HCT116 (cell line): ENCODE measurements at regions of chr7 and their contacts with region 1.

Region 1: DNA sequence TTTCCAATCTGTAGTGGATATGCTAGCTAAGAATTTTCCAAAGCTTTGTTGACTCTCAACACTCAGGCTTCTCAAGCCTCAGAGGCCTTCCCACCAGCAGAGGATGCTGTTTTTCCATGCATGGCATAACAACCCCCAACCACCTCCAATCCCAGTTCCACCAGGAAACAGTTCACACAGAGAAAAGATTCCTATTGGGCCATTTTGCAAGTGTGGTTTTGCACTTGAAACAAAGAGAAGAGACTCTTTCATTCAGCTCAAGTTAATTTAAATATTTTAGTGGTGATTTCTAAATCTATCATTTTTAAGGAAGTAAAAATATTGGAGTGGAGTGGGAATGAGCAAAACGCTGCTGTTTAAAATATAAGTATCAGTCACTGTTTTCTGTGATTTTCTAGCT is 105.6 kb upstream of the COL1A2 start:
- DNase-seq: peak; percentile 81
- ATAC-seq: peak; percentile 100
- H3K4me3 ChIP-seq: no peak overlapping the region
- H3K27ac ChIP-seq: no peak overlapping the region
- H3K4me1 ChIP-seq: no peaks in the 10 kb centered on the region
- H3K27me3 ChIP-seq: no peaks in the 10 kb centered on the region
- CTCF ChIP-seq: peak; percentile 92 to 98 (median 98)
- POLR2A ChIP-seq: no peak
- RAD21 ChIP-seq: peak; percentile 99

Region 2: GRCh38 chr7:94301024-94301586 is 12.0 kb after region 1 on chr7:
- CTCF ChIA-PET with region 1: interaction called, 15 read pairs
- POLR2A ChIA-PET with region 1: interaction called, 4 read pairs
- RAD21 ChIA-PET with region 1: interaction called in 1 of 2 experiments, 3 read pairs
- intact Hi-C with region 1: no loop called
- DNase-seq: peak; percentile 79
- ATAC-seq: peak; percentile 97
- H3K4me3 ChIP-seq: peak overlapping the region; percentile 13 to 24; a peak in 3 of 4 replicates
- H3K27ac ChIP-seq: peak overlapping the region; percentile 55
- H3K4me1 ChIP-seq: peaks cover 30 to 46% of the 10 kb centered on the region in 2 experiments
- H3K27me3 ChIP-seq: no peaks in the 10 kb centered on the region
- CTCF ChIP-seq: no peak
- POLR2A ChIP-seq: no peak
- RAD21 ChIP-seq: 0 out of 2 replicates have a peak, but pooled peaks have one; percentile 3

Region 3: GRCh38 chr7:94355454-94355853 is 66.4 kb after region 1 on chr7:
- CTCF ChIA-PET with region 1: no interaction called
- POLR2A ChIA-PET with region 1: no interaction called
- RAD21 ChIA-PET with region 1: no interaction called
- intact Hi-C with region 1: no loop called
- DNase-seq: no peak
- ATAC-seq: no peak
- H3K4me3 ChIP-seq: no peak overlapping the region
- H3K27ac ChIP-seq: no peak overlapping the region
- H3K4me1 ChIP-seq: no peaks in the 10 kb centered on the region
- H3K27me3 ChIP-seq: no peaks in the 10 kb centered on the region
- CTCF ChIP-seq: no peak
- POLR2A ChIP-seq: no peak
- RAD21 ChIP-seq: no peak

Region 4: DNA sequence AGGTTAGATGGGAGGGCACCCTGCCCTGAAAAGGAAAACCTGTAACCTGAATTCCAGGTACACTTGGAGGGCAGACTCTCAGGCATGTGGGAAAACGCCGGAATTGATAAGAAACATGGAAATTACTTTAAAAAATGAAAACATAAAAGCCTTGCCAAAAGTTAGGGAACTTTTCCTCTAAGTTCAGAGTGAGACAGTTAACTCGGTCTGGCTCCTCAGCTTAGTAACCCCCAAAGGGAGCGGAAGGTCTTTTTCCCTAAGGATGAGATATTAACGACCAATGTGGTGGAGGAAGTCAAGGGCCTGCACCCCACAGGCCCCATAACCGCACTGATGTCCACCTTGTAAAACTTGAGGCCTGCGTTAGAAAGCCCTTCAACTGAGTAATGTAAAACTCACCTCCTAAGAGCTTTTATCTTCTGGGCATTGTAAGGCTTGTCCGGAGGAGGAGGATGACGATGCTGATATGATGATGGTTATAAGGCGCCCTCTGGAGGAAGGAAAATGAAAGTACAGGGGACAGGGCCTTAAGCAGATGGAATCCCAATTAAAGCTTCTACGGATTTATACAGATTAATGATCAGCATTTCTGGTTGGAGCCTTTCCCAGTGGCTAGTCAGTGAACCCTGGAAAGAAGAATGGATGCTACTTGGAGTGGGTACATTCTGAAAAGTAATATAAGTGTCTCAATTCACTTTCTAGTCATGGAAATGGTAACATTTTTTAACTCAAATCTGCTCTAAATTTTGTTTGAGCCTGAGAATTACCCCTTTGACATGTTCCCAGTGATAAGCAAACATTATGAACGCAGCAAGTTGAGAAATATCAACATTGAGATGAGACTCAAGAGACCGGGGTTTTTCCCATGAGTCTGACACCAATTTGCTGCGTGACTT is 106.3 kb after region 1 on chr7:
- CTCF ChIA-PET with region 1: interaction called, 89 read pairs
- POLR2A ChIA-PET with region 1: interaction called, 5 read pairs
- RAD21 ChIA-PET with region 1: interaction called, 14 to 23 read pairs
- intact Hi-C with region 1: loop called (anchors 1 kb)
- DNase-seq: peak; percentile 59
- ATAC-seq: peak; percentile 96
- H3K4me3 ChIP-seq: no peak overlapping the region
- H3K27ac ChIP-seq: no peak overlapping the region
- H3K4me1 ChIP-seq: no peaks in the 10 kb centered on the region
- H3K27me3 ChIP-seq: no peaks in the 10 kb centered on the region
- CTCF ChIP-seq: peak; percentile 64 to 81 (median 78)
- POLR2A ChIP-seq: no peak
- RAD21 ChIP-seq: peak; percentile 87

Region 5: GRCh38 chr7:94436018-94436604 is 147.0 kb after region 1 on chr7:
- CTCF ChIA-PET with region 1: interaction called, 41 read pairs
- POLR2A ChIA-PET with region 1: no interaction called
- RAD21 ChIA-PET with region 1: interaction called in 1 of 2 experiments, 3 read pairs
- intact Hi-C with region 1: loop called (anchors 1 kb)
- DNase-seq: peak; percentile 54
- ATAC-seq: peak; percentile 99
- H3K4me3 ChIP-seq: no peak overlapping the region
- H3K27ac ChIP-seq: no peak overlapping the region
- H3K4me1 ChIP-seq: 0 out of 4 replicates have a peak, but pooled peaks cover 0 to 3% of the 10 kb centered on the region in 2 experiments
- H3K27me3 ChIP-seq: no peaks in the 10 kb centered on the region
- CTCF ChIP-seq: peak; percentile 70 to 85 (median 78)
- POLR2A ChIP-seq: no peak
- RAD21 ChIP-seq: peak; percentile 70

Region 6: GRCh38 chr7:95045236-95045923 is 756.3 kb after region 1 on chr7:
- CTCF ChIA-PET with region 1: no interaction called
- POLR2A ChIA-PET with region 1: no interaction called
- RAD21 ChIA-PET with region 1: no interaction called
- intact Hi-C with region 1: loop called (anchors 2 kb)
- DNase-seq: no peak
- ATAC-seq: no peak; the same call in 1 of the 2 replicates
- H3K4me3 ChIP-seq: no peak overlapping the region
- H3K27ac ChIP-seq: no peak overlapping the region
- H3K4me1 ChIP-seq: no peaks in the 10 kb centered on the region
- H3K27me3 ChIP-seq: no peaks in the 10 kb centered on the region
- CTCF ChIP-seq: peak in 2 of 3 experiments; percentile 25 to 81; a peak in 3 of 6 replicates
- POLR2A ChIP-seq: no peak
- RAD21 ChIP-seq: peak; percentile 71

Region 7: GRCh38 chr7:95246831-95247370 is 957.8 kb after region 1 on chr7:
- CTCF ChIA-PET with region 1: interaction called, 14 read pairs
- POLR2A ChIA-PET with region 1: no interaction called
- RAD21 ChIA-PET with region 1: no interaction called
- intact Hi-C with region 1: loop called (anchors 2 kb)
- DNase-seq: peak; percentile 54
- ATAC-seq: peak; percentile 86
- H3K4me3 ChIP-seq: no peak overlapping the region
- H3K27ac ChIP-seq: no peak overlapping the region
- H3K4me1 ChIP-seq: no peaks in the 10 kb centered on the region; a peak in 1 of 4 replicates
- H3K27me3 ChIP-seq: no peaks in the 10 kb centered on the region
- CTCF ChIP-seq: peak; percentile 44 to 77 (median 62); a peak in 5 of 6 replicates
- POLR2A ChIP-seq: no peak
- RAD21 ChIP-seq: peak; percentile 81

Region 8: GRCh38 chr7:95476904-95477594 is 1188.0 kb after region 1 on chr7:
- CTCF ChIA-PET with region 1: interaction called, 12 read pairs
- POLR2A ChIA-PET with region 1: no interaction called
- RAD21 ChIA-PET with region 1: no interaction called
- intact Hi-C with region 1: loop called (anchors 2 kb)
- DNase-seq: peak; percentile 62
- ATAC-seq: peak; percentile 72
- H3K4me3 ChIP-seq: no peak overlapping the region
- H3K27ac ChIP-seq: no peak overlapping the region
- H3K4me1 ChIP-seq: peaks cover 0 to 6% of the 10 kb centered on the region in 2 experiments; a peak in 1 of 4 replicates
- H3K27me3 ChIP-seq: no peaks in the 10 kb centered on the region
- CTCF ChIP-seq: peak; percentile 58 to 80 (median 62); a peak in 5 of 6 replicates
- POLR2A ChIP-seq: no peak
- RAD21 ChIP-seq: peak; percentile 82